PC-9 (cell line): ENCODE measurements at regions of chr9 and their contacts with region 1.

Region 1: DNA sequence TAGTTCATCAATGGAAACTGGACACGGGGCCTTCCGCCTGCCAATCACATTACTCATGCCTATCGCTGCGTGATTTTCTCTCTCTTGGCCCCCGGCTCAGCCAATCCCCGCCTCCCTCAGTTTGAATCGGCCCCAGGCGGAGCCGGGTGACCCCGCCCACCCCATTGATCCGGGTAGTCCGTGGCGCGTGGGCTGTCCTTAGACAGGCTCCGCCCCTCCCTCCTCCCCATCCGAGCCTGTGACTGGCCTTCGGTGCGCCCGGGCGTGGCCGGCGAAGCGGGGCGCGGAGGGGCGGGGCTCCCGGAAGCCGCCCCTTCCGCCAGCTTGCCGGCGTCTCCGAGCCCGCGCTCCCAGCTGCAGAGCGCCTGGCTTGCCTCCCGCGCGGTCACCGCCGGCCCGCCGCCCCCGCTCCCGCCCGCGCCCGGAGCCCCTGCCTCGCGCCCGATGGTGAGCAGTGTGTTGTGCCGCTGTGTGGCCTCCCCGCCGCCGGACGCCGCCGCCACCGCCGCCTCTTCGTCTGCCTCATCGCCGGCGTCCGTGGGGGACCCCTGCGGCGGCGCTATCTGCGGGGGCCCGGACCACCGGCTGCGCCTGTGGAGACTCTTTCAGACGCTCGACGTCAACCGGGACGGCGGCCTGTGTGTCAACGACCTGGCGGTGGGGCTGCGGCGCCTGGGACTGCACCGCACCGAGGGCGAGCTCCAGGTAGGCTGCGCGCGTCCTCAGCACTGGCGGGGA is at the start of gene SLC25A25:
- DNase-seq: peak; percentile 96 to 100
- H3K4me3 ChIP-seq: peak within 1 kb of the TSS; percentile 87
- H3K27ac ChIP-seq: peak within 1 kb of the TSS; percentile 94
- H3K4me1 ChIP-seq: peaks cover 42% of the 10 kb centered on the region
- H3K27me3 ChIP-seq: no peaks in the 10 kb centered on the region
- CTCF ChIP-seq: no peak
- total RNA-seq, gene SLC25A25: 11.7 and 13.4 TPM in 2 replicates

Region 2: GRCh38 chr9:128053560-128053959 is 14.5 kb before region 1 on chr9:
- CTCF ChIA-PET with region 1: interaction called, 13 read pairs
- POLR2A ChIA-PET with region 1: interaction called, 11 read pairs
- intact Hi-C with region 1: loop called (anchors 1 kb)
- DNase-seq: no peak
- H3K4me3 ChIP-seq: no peak overlapping the region
- H3K27ac ChIP-seq: no peak overlapping the region
- H3K4me1 ChIP-seq: peaks cover 32% of the 10 kb centered on the region
- H3K27me3 ChIP-seq: no peaks in the 10 kb centered on the region
- CTCF ChIP-seq: no peak